A549 (cell line): ENCODE measurements at regions of chr11 and their contacts with region 1.

Region 1: GRCh38 chr11:72831513-72832300 is 17.5 kb downstream of the ATG16L2 start:
- DNase-seq: peak; percentile 74 to 77
- ATAC-seq: peak; percentile 93 to 96
- H3K4me3 ChIP-seq: no peak overlapping the region
- H3K27ac ChIP-seq: peak overlapping the region; percentile 32 to 75; a peak in 4 of 6 replicates
- H3K4me1 ChIP-seq: peaks cover 4% of the 10 kb centered on the region; the same call in 2 of the 3 replicates
- CTCF ChIP-seq: peak; percentile 90
- EP300 ChIP-seq: no peak
- POLR2A ChIP-seq: no peak
- RAD21 ChIP-seq: peak; percentile 95 to 97

Region 2: GRCh38 chr11:72585762-72586311 is 245.9 kb before region 1 on chr11:
- CTCF ChIA-PET with region 1: no interaction called
- POLR2A ChIA-PET with region 1: no interaction called
- DNase-seq: peak; percentile 64 to 77
- ATAC-seq: peak; percentile 27 to 75; a peak in 3 of 6 replicates
- H3K4me3 ChIP-seq: no peak overlapping the region
- H3K27ac ChIP-seq: no peak overlapping the region
- H3K4me1 ChIP-seq: 0 out of 3 replicates have a peak, but pooled peaks cover 6% of the 10 kb centered on the region
- CTCF ChIP-seq: peak; percentile 87
- EP300 ChIP-seq: no peak
- POLR2A ChIP-seq: no peak
- RAD21 ChIP-seq: peak; percentile 69 to 72

Region 3: GRCh38 chr11:72814286-72815109 is 17.2 kb before region 1 on chr11 and contains the start of gene ATG16L2:
- CTCF ChIA-PET with region 1: interaction called, 12 read pairs
- POLR2A ChIA-PET with region 1: no interaction called
- DNase-seq: peak; percentile 90 to 93
- ATAC-seq: peak; percentile 72 to 85
- H3K4me3 ChIP-seq: peak within 1 kb of the TSS; percentile 58
- H3K27ac ChIP-seq: peak within 1 kb of the TSS; percentile 78 to 95
- H3K4me1 ChIP-seq: peaks cover 22% of the 10 kb centered on the region
- CTCF ChIP-seq: peak; percentile 12; the same call in 1 of the 3 replicates
- EP300 ChIP-seq: peak in 1 of 2 experiments; percentile 25; a peak in 1 of 5 replicates
- POLR2A ChIP-seq: peak; percentile 93
- RAD21 ChIP-seq: peak in 1 of 2 experiments; percentile 33; a peak in 3 of 5 replicates
- polyA plus RNA-seq, gene ATG16L2: 6.1 and 6.2 TPM in 2 replicates

Region 4: DNA sequence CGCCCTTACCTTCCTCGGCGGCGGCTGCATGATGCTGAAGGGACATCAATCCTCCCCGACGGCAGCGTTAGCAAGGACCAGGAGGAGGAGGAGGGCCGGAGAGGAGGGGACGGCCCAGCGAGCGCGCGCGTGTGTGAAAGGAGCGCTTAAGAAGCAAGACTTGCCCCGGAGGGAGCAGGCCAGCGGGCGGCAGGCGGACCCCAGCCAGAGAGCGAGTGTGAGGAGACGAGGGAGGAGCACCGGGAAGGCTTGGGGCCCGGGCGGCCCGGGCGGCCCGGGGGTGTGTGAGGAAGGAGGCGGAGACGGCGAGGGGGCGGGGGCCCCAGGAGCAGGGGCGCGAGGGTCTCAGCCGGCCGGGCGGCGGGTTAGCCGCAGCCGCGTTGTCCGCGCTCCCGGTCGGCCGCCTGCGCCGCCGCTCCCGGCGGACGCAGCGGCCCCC is 310.2 kb after region 1 on chr11:
- CTCF ChIA-PET with region 1: interaction called, 27 read pairs
- POLR2A ChIA-PET with region 1: interaction called, 3 read pairs
- DNase-seq: peak; percentile 56 to 73
- ATAC-seq: peak; percentile 65 to 70
- H3K4me3 ChIP-seq: peak overlapping the region; percentile 97
- H3K27ac ChIP-seq: peak overlapping the region; percentile 92 to 96
- H3K4me1 ChIP-seq: peaks cover 16% of the 10 kb centered on the region
- CTCF ChIP-seq: no peak
- EP300 ChIP-seq: no peak
- POLR2A ChIP-seq: peak; percentile 52; the same call in 1 of the 2 replicates
- RAD21 ChIP-seq: no peak

Region 5: GRCh38 chr11:73164803-73165540 is 333.3 kb after region 1 on chr11:
- CTCF ChIA-PET with region 1: interaction called, 339 read pairs
- POLR2A ChIA-PET with region 1: no interaction called
- DNase-seq: no peak
- ATAC-seq: no peak
- H3K4me3 ChIP-seq: no peak overlapping the region
- H3K27ac ChIP-seq: no peak overlapping the region
- H3K4me1 ChIP-seq: no peaks in the 10 kb centered on the region
- CTCF ChIP-seq: no peak
- EP300 ChIP-seq: no peak
- POLR2A ChIP-seq: no peak
- RAD21 ChIP-seq: no peak

Region 6: DNA sequence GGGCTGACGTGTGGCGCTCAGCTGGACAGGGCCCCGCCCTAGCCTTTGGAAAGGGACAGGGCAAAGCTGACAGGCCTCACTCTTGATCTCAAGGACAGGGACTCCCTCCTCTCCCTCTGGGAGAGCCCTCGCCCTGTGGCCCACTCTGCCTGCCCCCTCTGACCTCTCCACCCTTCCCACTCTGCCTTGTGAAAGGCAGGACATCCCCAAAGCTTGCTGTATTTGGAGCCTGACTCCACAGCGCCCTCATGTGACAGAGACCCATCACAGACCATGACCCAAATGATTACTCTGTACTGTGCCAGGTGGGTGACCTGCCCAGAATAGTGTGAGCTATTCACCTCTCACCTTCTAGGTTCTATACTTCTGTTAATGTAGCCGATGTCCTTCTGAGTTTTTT is 405.1 kb after region 1 on chr11:
- CTCF ChIA-PET with region 1: interaction called, 74 read pairs
- POLR2A ChIA-PET with region 1: no interaction called
- DNase-seq: peak; percentile 63 to 69
- ATAC-seq: peak; percentile 46 to 80; a peak in 4 of 6 replicates
- H3K4me3 ChIP-seq: no peak overlapping the region
- H3K27ac ChIP-seq: no peak overlapping the region
- H3K4me1 ChIP-seq: peaks cover 13% of the 10 kb centered on the region; the same call in 2 of the 3 replicates
- CTCF ChIP-seq: peak; percentile 52
- EP300 ChIP-seq: no peak
- POLR2A ChIP-seq: no peak
- RAD21 ChIP-seq: peak; percentile 46 to 72

Region 7: GRCh38 chr11:73242251-73243079 is 410.8 kb after region 1 on chr11:
- CTCF ChIA-PET with region 1: interaction called, 74 read pairs
- POLR2A ChIA-PET with region 1: no interaction called
- DNase-seq: peak; percentile 76 to 90
- ATAC-seq: peak; percentile 86 to 93
- H3K4me3 ChIP-seq: no peak overlapping the region
- H3K27ac ChIP-seq: peak overlapping the region; percentile 69 to 92
- H3K4me1 ChIP-seq: peaks cover 22% of the 10 kb centered on the region; the same call in 2 of the 3 replicates
- CTCF ChIP-seq: peak; percentile 94
- EP300 ChIP-seq: no peak
- POLR2A ChIP-seq: no peak
- RAD21 ChIP-seq: peak; percentile 92 to 93